Dendritic cell treated with granulocyte-macrophage colony-stimulating factor and Interleukin-4, amounts not matched to agents 40 ng/mL and 50 ng/mL, for 4 days (primary cell): ENCODE measurements at regions of chr16 and their contacts with region 1.

Region 1: GRCh38 chr16:28924732-28925385 is at the start of gene RABEP2:
- H3K4me3 Mint-ChIP-seq: peak within 1 kb of the TSS; percentile 89
- H3K27ac Mint-ChIP-seq: peak within 1 kb of the TSS; percentile 96
- H3K4me1 Mint-ChIP-seq: peaks cover 34% of the 10 kb centered on the region
- H3K27me3 Mint-ChIP-seq: no peaks in the 10 kb centered on the region

Region 2: GRCh38 chr16:28863929-28864793 is 60.7 kb before region 1 on chr16:
- intact Hi-C with region 1: loop called (anchors 10 kb)
- H3K4me3 Mint-ChIP-seq: peak overlapping the region; percentile 89
- H3K27ac Mint-ChIP-seq: peak overlapping the region; percentile 96
- H3K4me1 Mint-ChIP-seq: peaks cover 26% of the 10 kb centered on the region
- H3K27me3 Mint-ChIP-seq: no peaks in the 10 kb centered on the region

Region 3: DNA sequence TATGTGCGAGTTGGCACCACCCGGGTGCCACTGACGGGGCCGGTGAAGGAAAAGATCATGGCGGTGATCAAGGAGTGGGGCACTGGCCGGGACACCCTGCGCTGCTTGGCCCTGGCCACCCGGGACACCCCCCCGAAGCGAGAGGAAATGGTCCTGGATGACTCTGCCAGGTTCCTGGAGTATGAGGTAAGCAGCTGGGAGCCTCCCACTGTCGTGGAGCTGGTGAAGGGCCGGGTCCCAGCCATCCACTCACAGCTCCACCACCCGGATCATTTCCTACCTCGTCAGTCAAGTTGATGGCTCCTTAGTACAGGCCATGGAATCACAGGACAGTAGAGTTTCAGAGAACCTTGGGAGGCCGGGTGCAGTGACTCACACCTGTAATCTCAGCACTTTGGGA is 26.6 kb before region 1 on chr16:
- intact Hi-C with region 1: no loop called
- H3K4me3 Mint-ChIP-seq: no peak overlapping the region
- H3K27ac Mint-ChIP-seq: no peak overlapping the region
- H3K4me1 Mint-ChIP-seq: peaks cover 15% of the 10 kb centered on the region
- H3K27me3 Mint-ChIP-seq: no peaks in the 10 kb centered on the region

Region 4: DNA sequence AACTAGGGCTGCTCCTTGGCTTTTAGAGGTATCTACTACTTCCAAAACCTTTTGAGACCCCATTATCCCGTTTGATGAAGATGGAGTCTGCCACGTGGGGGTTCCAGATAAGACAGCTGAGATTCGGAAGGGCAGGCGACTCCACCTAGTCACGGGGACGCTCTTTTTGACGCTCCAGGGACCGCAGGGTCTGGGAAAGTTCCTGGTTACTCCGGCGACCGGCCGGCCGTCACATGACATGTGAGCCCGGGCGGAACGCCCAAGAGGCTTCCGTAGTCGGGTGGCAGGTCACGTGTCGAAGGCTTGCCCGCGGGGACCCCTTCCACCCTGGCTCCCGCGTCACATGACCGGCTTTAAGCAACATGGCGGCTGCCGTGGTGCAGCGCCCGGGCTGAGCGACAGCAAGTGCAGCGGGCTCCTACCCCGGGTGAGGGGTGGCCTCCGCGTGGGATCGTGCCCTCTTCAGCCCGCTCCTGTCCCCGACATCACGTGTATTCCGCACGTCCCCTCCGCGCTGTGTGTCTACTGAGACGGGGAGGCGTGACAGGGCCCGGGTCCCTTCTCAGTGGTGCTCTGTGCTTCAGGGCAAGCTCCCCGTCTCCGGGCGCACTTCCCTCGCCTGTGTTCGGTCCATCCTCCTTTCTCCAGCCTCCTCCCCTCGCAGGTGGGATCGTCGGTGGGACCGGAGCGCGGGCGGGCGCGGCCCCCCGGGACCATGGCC is 49.7 kb after region 1 on chr16 and contains the start of gene SPNS1:
- intact Hi-C with region 1: no loop called
- H3K4me3 Mint-ChIP-seq: peak within 1 kb of the TSS; percentile 88
- H3K27ac Mint-ChIP-seq: peak within 1 kb of the TSS; percentile 94
- H3K4me1 Mint-ChIP-seq: peaks cover 40% of the 10 kb centered on the region
- H3K27me3 Mint-ChIP-seq: no peaks in the 10 kb centered on the region